Right lobe of liver (tissue), 6 donors: ENCODE measurements at regions of chr20 and their contacts with region 1.

Region 1: DNA sequence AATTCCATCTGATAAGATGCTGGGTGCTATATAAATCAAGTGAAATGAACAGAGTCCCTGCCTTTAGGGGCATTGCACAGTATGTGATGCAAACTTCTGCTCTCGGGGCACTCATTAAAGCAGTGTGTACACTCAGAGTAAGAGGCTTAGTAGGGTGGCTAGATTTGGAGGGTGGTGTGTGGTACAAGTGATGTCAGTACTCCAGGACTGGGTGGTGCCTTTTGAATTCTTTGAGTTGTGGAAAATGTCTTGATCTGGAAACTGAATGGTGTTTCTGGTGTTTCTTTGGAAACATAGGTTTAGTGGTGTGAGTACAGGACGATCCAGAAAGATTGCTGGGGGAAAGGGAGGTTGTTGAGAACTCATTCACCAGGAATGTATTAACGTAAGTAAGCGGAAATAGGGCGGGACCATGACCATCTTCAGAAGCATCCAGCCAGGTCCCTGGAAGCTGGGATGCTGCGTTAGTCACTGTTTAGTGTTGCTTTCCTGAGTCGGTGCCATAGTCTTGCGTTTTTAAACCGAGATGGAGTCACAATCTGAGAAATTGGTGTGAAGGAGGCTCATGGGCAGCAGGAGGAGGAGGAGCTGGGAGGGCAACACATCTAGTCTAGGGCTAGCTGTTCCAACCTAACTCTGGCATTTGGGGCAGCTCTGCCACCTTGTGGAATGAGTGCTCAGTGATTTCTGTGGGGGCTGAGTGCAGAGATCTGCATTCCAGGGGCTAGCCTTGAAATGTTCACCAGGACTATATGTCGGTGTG is 70.3 kb downstream of the SCAND1 start:
- DNase-seq: peak; percentile 51 to 61 (median 61)
- ATAC-seq: peak; percentile 95 to 99 (median 98)
- H3K4me3 ChIP-seq: no peak overlapping the region
- H3K27ac ChIP-seq: no peak overlapping the region
- H3K4me1 ChIP-seq: no peaks in the 10 kb centered on the region
- H3K27me3 ChIP-seq: no peaks in the 10 kb centered on the region
- CTCF ChIP-seq: peak; percentile 50 to 74 (median 70)
- POLR2A ChIP-seq: no peak

Region 2: DNA sequence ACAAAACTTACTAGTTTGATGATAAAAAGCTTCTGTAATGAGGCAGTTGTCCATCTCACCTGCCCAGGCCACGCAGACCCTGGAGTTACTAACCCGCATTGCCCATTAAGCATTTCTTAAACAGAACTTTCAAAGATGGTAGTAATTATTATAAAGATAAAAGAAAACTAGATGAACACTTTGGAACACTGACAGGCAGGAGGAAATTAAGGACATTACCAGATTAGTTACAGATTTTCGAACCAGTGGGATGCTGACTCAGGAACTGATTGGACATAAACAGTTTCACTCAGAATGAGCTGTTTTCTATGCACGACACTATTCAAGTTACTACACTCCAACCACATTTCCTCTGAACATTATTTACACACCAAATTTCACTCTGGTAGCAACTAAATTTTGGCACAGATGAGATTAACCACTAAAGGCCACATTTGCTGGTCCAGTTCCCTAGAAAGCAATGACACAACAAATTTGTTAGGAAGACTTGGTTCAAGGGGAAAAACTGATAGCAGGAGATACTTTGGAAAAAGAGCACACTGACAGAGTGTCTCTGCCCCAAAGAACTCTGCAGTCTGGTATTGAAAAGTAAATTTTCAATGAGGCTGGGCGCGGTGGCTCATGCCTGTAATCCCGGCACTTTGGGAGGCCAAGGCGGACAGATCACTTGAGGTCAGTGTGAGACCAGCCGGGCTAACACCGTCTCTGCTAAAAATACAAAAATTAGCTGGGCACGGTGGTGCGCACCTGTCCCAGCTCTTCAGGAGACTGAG is 181.7 kb before region 1 on chr20:
- intact Hi-C with region 1: loop called in 1 of 2 experiments (anchors 10 kb)
- DNase-seq: no peak
- ATAC-seq: no peak
- H3K4me3 ChIP-seq: no peak overlapping the region
- H3K27ac ChIP-seq: no peak overlapping the region
- H3K4me1 ChIP-seq: peaks cover 0 to 13% (median 0%) of the 10 kb centered on the region in 4 donors
- H3K27me3 ChIP-seq: no peaks in the 10 kb centered on the region
- CTCF ChIP-seq: no peak
- POLR2A ChIP-seq: peak; percentile 6

Region 3: GRCh38 chr20:35718972-35719635 is 164.9 kb before region 1 on chr20:
- intact Hi-C with region 1: loop called in 1 of 2 experiments (anchors 10 kb)
- DNase-seq: no peak
- ATAC-seq: no peak
- H3K4me3 ChIP-seq: no peak overlapping the region
- H3K27ac ChIP-seq: no peak overlapping the region
- H3K4me1 ChIP-seq: no peaks in the 10 kb centered on the region
- H3K27me3 ChIP-seq: no peaks in the 10 kb centered on the region
- CTCF ChIP-seq: no peak
- POLR2A ChIP-seq: no peak